CD4-positive, alpha-beta memory T cell (primary cell): ENCODE measurements at regions of chr7 and their contacts with region 1.

Region 1: GRCh38 chr7:150567169-150567568 is at the start of gene GIMAP4:
- DNase-seq: peak in 4 of 5 donors; percentile 35 to 50 (median 37)
- H3K4me3 ChIP-seq: peak within 1 kb of the TSS; percentile 92 to 96
- H3K4me3 Mint-ChIP-seq: peak within 1 kb of the TSS; percentile 98 to 100 (median 100)
- H3K27ac ChIP-seq: peak within 1 kb of the TSS; percentile 70
- H3K27ac Mint-ChIP-seq: peak within 1 kb of the TSS; percentile 86 to 99 (median 96)
- H3K4me1 ChIP-seq: peaks cover 73% of the 10 kb centered on the region
- H3K4me1 Mint-ChIP-seq: peaks cover 49 to 80% (median 63%) of the 10 kb centered on the region in 4 donors
- H3K27me3 ChIP-seq: no peaks in the 10 kb centered on the region
- H3K27me3 Mint-ChIP-seq: no peaks in the 10 kb centered on the region
- total RNA-seq, gene GIMAP4: 418 to 448 TPM

Region 2: DNA sequence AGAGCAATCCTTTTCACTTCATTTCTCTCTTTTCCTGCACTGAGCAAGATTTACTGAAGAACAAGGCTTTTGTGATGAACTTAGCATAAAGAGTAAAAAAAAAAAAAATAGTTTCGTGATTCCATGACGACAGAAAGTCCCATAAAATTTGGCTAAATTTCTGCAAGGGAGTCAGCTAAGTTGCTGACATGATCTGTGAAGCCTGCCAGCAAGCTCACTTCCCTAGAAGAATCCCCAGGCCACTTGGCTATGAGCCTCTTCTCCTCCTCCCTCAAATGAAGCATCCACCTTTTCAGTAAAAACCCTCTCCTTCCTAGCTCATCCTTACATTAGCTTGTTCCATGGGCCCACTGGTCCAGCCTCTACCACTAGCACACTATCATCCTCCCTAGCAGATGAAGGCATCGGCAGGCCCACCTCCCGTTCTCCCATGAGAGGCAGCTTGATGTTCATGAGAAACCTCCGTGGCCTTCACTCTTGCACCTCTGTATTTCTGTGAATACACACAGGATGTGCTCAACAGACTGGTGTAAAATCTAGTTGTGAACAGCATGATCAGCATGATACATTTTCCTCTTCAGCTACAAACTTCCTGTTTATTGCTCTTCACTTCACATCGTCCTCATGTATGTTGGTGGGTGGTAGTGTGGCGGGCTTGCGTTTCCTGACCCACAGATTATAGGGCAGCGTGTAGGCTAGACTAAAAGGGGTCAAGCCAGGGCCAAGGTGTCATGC is 85.8 kb before region 1 on chr7:
- CTCF ChIA-PET with region 1: interaction called, 7 read pairs
- POLR2A ChIA-PET with region 1: interaction called, 92 read pairs
- intact Hi-C with region 1: no loop called
- DNase-seq: peak; percentile 63 to 87 (median 69)
- H3K4me3 ChIP-seq: peak overlapping the region in 1 of 2 donors; percentile 37
- H3K4me3 Mint-ChIP-seq: peak overlapping the region; percentile 80 to 90 (median 88)
- H3K27ac ChIP-seq: peak overlapping the region; percentile 71
- H3K27ac Mint-ChIP-seq: peak overlapping the region; percentile 96 to 100 (median 99)
- H3K4me1 ChIP-seq: peaks cover 99% of the 10 kb centered on the region
- H3K4me1 Mint-ChIP-seq: peaks cover 75 to 98% (median 91%) of the 10 kb centered on the region in 4 donors
- H3K27me3 ChIP-seq: no peaks in the 10 kb centered on the region
- H3K27me3 Mint-ChIP-seq: no peaks in the 10 kb centered on the region

Region 3: DNA sequence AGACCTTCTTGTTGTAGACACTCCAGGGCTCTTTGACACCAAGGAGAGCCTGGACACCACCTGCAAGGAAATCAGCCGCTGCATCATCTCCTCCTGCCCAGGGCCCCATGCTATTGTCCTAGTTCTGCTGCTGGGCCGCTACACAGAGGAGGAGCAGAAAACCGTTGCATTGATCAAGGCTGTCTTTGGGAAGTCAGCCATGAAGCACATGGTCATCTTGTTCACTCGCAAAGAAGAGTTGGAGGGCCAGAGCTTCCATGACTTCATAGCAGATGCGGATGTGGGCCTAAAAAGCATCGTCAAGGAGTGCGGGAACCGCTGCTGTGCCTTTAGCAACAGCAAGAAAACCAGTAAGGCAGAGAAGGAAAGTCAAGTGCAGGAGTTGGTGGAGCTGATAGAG is 47.0 kb before region 1 on chr7:
- CTCF ChIA-PET with region 1: interaction called, 21 read pairs
- POLR2A ChIA-PET with region 1: interaction called, 777 read pairs
- intact Hi-C with region 1: loop called (anchors 1 kb)
- DNase-seq: peak in 1 of 5 donors; percentile 34
- H3K4me3 ChIP-seq: peak overlapping the region; percentile 61 to 74
- H3K4me3 Mint-ChIP-seq: peak overlapping the region; percentile 97 to 100 (median 99)
- H3K27ac ChIP-seq: peak overlapping the region; percentile 62
- H3K27ac Mint-ChIP-seq: peak overlapping the region; percentile 81 to 97 (median 92)
- H3K4me1 ChIP-seq: peaks cover 18% of the 10 kb centered on the region
- H3K4me1 Mint-ChIP-seq: peaks cover 21 to 50% (median 33%) of the 10 kb centered on the region in 4 donors
- H3K27me3 ChIP-seq: no peaks in the 10 kb centered on the region
- H3K27me3 Mint-ChIP-seq: no peaks in the 10 kb centered on the region

Region 4: DNA sequence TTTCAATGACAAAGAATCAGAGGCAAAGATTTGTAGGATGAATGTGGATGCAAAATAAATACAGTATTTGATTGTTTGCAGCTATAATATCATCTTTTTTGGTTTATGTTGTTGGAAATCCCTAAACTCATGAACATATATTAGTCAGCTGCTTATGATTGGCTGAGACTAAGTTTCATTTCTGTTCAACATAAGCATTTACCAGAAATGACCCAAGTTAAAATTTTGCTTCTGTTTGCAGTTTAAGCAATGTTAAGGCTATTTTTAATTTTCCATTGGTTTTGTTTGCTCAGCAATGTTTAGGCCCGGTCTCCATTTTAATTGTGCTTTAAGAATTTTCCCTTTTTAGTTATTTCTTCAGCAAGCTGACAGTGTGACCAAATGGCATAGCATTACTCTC is 43.1 kb after region 1 on chr7:
- CTCF ChIA-PET with region 1: interaction called, 5 read pairs
- POLR2A ChIA-PET with region 1: interaction called, 54 read pairs
- intact Hi-C with region 1: loop called (anchors 5 kb)
- DNase-seq: no peak
- H3K4me3 ChIP-seq: no peak overlapping the region
- H3K4me3 Mint-ChIP-seq: peak overlapping the region in 1 of 8 donors; percentile 20
- H3K27ac ChIP-seq: no peak overlapping the region
- H3K27ac Mint-ChIP-seq: peak overlapping the region in 2 of 7 donors; percentile 52 to 77
- H3K4me1 ChIP-seq: peaks cover 27% of the 10 kb centered on the region
- H3K4me1 Mint-ChIP-seq: peaks cover 43 to 83% (median 67%) of the 10 kb centered on the region in 4 donors
- H3K27me3 ChIP-seq: no peaks in the 10 kb centered on the region
- H3K27me3 Mint-ChIP-seq: no peaks in the 10 kb centered on the region

Region 5: GRCh38 chr7:150675714-150676113 is 108.5 kb after region 1 on chr7:
- CTCF ChIA-PET with region 1: interaction called, 5 read pairs
- POLR2A ChIA-PET with region 1: interaction called, 73 read pairs
- intact Hi-C with region 1: no loop called
- DNase-seq: no peak
- H3K4me3 ChIP-seq: no peak overlapping the region
- H3K4me3 Mint-ChIP-seq: peak overlapping the region; percentile 39 to 89 (median 61)
- H3K27ac ChIP-seq: peak overlapping the region; percentile 18
- H3K27ac Mint-ChIP-seq: peak overlapping the region; percentile 26 to 92 (median 86)
- H3K4me1 ChIP-seq: peaks cover 75% of the 10 kb centered on the region
- H3K4me1 Mint-ChIP-seq: peaks cover 55 to 87% (median 70%) of the 10 kb centered on the region in 4 donors
- H3K27me3 ChIP-seq: no peaks in the 10 kb centered on the region
- H3K27me3 Mint-ChIP-seq: no peaks in the 10 kb centered on the region

Region 6: DNA sequence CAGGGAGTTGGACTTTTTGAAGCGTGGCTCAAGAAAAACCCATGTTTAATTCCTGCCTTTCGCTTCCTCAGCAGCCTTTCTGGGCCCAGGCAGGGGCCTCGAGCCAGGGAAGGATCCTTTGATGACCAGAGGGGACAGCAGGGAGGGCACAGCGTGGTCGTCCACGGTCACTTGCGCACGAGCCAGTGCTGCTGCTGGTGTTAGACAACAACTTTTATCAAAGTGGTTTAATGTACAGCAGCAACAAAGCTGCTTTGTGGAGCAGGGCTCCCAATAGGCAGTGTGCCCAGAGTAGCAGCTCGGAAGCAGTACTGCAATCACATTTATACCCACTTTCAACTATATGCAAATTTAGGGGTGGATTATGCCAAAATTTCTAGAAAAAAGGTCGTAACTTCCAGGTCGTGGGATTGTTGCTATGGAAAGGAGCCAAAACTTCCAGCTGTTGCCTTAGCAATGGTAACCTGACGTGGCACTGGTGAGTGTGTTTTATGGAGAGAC is 155.3 kb after region 1 on chr7:
- CTCF ChIA-PET with region 1: interaction called, 29 read pairs
- POLR2A ChIA-PET with region 1: interaction called, 170 read pairs
- intact Hi-C with region 1: no loop called
- DNase-seq: peak in 1 of 5 donors; percentile 9
- H3K4me3 ChIP-seq: peak overlapping the region in 1 of 2 donors; percentile 6
- H3K4me3 Mint-ChIP-seq: peak overlapping the region; percentile 57 to 72 (median 66)
- H3K27ac ChIP-seq: no peak overlapping the region
- H3K27ac Mint-ChIP-seq: peak overlapping the region in 4 of 7 donors; percentile 38 to 80 (median 74)
- H3K4me1 ChIP-seq: peaks cover 57% of the 10 kb centered on the region
- H3K4me1 Mint-ChIP-seq: peaks cover 45 to 81% (median 57%) of the 10 kb centered on the region in 4 donors
- H3K27me3 ChIP-seq: no peaks in the 10 kb centered on the region
- H3K27me3 Mint-ChIP-seq: no peaks in the 10 kb centered on the region